ENCODE measurements at regions of chr15 and their contacts with region 1.

Region 1: DNA sequence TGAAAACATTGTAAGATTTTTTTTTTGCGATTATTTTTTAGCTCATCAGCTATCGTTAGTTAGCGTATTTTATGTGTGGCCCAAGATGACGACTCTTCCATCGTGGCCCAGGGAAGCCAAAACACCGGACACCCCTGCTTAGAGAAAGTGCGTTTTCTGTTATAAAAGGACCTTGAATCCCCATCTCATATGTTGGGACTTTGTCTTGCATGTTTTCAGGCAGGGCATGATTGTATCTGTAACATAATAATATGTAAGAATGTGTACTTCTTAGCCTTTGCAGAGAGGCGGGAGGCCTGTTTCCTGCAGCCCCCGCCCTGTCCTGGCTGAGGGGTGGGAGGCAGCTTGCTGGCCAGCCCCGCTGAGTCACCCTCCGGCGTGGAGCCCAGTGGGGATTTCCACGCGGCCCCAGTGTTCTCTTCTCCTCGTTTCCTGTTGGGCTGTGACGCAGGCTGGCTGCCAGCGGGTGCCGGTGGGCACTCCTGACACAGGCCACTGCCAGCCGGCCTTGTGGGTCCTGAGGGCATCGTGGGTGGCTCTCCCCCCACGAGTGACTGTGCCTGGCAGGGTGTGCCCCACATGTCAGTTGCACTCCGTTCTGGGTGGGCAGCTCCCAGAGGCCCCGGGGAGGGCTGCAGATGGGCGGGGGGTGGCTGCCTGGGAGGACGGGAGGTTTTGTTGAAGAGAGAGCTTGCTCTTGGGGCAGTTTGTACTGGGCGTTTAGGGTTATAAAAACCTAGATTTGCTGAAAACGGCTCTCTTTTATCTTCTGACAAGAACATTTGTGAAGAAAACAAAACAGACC is 55.6 kb downstream of the SMAD3 start:
- DNase-seq: no peak
- H3K4me3 ChIP-seq: peak overlapping the region; percentile 15 to 44
- H3K27ac ChIP-seq: peak overlapping the region; percentile 87
- H3K4me1 ChIP-seq: peaks cover 95% of the 10 kb centered on the region
- H3K27me3 ChIP-seq: no peaks in the 10 kb centered on the region
- CTCF ChIP-seq: no peak
- POLR2A ChIP-seq: peak in 1 of 2 donors; percentile 14

Region 2: DNA sequence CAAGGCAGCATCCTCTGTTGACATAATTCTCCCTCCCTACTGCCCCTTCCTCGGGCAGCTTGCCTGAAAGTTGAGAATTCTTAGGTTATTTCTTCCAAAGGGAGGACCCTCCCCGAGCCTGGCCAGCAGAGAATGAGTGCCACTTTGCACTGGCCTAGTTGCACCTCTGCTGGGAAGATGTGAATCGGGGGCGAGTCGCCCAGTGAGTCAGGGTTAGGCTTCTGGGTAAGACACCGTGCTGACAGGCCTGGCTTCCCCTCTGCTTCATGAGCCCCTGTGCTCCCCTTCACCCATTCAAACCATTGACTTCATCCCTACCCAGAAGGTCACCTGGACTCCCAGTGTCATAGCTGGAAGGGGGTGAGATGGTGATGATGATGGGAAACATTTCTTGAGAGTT is 51.1 kb after region 1 on chr15:
- intact Hi-C with region 1: no loop called
- DNase-seq: no peak
- H3K4me3 ChIP-seq: no peak overlapping the region
- H3K27ac ChIP-seq: no peak overlapping the region
- H3K4me1 ChIP-seq: peaks cover 54% of the 10 kb centered on the region
- H3K27me3 ChIP-seq: no peaks in the 10 kb centered on the region
- CTCF ChIP-seq: no peak
- POLR2A ChIP-seq: no peak

Region 3: DNA sequence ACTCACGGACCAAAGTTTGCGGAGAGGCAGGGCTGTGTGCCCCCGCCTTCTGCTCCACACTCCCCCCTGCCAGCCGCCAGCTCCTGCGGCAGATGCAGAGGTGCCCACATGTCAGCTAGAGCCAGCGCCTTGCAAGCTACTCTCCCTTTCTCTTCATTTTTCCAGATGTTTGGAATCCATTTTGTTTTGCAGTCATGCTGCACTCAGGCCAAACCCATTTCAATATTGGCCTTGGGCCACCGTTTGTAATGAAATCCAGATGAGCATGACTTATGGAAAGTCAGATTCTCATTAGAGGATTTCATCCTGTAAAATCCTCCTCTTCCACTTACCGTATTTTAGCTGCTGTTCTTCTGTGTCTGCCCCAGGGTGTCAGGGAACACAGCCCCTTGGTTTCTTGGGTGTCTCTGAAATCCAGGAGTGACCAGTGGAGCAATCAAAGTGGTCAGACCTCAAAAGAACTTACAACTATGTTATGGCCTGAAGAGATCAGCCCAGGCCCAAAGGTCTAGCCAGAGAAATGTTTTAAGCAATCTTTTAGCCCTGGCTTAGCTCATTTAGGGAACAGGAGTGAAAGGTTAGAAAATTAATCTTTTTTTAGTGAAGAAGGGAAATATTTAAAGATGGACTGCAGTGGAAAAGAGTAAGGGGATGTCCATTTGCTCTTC is 67.6 kb after region 1 on chr15:
- intact Hi-C with region 1: loop called (anchors 10 kb)
- DNase-seq: peak in 1 of 2 donors; percentile 88
- H3K4me3 ChIP-seq: no peak overlapping the region
- H3K27ac ChIP-seq: peak overlapping the region; percentile 82
- H3K4me1 ChIP-seq: peaks cover 77% of the 10 kb centered on the region
- H3K27me3 ChIP-seq: no peaks in the 10 kb centered on the region
- CTCF ChIP-seq: no peak
- POLR2A ChIP-seq: no peak

Measured in vagina (tissue), 2 donors.